GM18951 (cell line): ENCODE measurements at regions of chr17 and their contacts with region 1.

Region 1: DNA sequence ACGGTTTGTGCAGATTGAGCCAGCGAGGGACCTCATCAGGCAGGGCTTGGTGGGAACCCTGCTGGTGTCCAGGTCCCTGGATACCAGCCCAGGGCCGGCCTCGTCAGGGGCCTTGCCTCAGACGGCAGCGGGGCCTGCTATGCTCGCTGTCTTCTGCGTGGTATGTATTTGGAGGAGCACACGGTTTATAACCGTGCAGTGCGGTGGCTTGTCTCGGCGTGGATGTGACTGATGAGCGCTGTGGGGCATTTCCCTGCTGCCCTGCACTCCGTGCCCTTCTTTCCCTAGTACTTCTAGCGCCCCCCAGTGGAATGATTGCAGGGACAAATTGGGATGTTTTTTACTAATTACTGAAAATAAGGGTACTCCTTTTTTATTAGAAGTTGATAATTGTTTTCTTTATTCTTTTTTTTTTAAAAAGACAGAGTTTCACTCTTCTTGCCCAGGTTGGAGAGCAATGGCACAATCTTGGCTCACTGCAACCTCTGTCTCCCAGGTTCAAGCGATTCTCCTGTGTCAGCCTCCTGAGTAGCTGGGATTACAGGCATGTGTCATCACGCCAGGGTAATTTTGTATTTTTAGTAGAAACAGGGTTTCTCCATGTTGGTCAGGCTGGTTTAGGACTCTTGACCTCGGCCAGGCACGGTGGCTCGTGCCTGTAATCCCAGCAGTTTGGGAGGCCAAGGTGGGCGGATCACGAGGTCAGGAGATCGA is 15.3 kb downstream of the TBCD start:
- POLR2A ChIP-seq: no peak

Region 2: DNA sequence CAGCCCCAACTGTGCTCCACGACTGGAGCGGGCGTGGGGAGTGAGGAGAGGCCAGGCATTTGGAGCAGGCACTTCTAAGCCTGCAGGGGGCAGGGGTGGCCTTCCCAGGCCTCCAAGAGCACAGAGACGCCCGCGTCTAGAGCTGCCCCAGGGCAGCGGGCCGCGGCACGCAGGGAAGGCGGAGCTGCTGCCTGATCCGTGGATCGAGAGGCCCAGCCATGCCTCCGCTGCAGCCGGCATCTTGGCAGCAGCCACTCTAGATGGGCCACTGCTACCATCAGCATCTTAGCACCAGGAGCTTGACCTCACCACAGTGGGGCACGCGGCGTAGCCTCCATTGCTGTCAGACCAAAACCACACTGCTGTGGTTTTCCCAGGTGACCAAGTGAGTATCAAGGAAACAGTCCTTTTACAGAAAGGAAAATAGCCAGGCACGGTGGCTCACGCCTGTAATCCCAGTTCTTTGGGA is 98.5 kb before region 1 on chr17:
- in situ Hi-C with region 1: loop called (anchors 10 kb)
- POLR2A ChIP-seq: no peak

Region 3: DNA sequence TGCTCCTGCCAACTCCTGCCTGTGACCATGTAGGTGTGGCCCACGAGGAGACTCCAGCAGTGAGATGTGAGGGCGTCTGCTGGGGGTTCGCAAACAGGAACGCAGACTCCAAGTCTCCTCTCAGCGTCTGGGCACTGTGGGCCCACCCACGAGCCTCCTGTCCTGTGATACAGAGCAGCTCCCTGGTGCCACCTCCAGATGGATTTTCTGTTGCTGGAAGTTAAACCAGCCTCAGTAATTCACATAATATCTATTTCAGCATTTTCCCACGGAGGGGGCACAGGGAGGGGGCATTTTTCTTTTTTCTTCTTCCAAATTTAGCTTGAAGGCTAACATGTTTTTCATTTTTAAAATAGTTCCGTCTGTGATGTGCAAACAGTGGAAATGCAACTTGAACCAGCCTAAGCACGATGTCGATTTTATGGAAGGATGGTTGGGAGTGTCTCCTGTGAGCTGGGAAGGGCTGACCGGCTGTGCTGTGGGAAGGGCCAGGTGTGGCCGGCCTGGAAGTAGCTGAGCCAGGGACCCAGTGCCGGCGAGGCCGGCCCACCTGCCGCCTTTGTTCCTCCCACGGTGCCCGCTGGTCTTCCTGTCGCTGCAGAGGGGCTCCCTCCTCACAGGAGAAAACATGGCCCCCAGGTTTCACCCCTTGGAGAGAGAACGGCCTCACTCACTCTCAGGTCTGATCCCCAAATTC is 64.8 kb before region 1 on chr17:
- in situ Hi-C with region 1: no loop called
- POLR2A ChIP-seq: no peak

Region 4: DNA sequence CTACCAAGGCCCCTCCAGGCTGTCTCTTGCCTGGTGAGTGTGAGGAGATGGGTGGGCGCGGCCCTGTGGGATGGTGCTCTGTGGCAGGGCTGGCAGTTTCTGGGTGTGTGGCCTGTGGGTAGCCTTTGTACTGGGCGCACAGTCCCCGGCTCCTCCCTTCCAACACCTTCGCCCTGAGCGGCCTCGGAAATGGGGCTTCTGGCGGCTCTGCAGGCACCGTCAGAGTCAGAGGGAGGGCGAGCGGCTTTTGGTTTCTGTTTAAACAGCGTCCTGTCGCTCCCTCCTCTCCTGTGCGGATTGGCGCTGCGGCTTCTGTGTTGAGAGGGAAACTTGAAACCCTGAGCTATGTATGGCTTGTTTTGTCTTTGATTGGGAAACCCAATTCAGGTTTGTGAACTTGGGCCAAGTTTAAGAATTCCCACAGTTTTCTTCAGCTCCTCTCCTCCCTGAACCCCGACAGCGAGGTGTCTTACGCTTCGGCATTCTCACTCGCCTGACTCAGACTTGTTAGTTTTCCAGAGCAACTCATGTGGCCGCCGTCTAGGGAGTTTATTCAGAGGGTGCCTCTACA is 80.9 kb after region 1 on chr17:
- in situ Hi-C with region 1: no loop called
- POLR2A ChIP-seq: no peak